Left colon (tissue), 2 donors: ENCODE measurements at regions of chr9 and their contacts with region 1.

Region 1: GRCh38 chr9:77751341-77752091 is 103.4 kb upstream of the GNA14 start:
- DNase-seq: no peak
- ATAC-seq: peak; percentile 79

Region 2: DNA sequence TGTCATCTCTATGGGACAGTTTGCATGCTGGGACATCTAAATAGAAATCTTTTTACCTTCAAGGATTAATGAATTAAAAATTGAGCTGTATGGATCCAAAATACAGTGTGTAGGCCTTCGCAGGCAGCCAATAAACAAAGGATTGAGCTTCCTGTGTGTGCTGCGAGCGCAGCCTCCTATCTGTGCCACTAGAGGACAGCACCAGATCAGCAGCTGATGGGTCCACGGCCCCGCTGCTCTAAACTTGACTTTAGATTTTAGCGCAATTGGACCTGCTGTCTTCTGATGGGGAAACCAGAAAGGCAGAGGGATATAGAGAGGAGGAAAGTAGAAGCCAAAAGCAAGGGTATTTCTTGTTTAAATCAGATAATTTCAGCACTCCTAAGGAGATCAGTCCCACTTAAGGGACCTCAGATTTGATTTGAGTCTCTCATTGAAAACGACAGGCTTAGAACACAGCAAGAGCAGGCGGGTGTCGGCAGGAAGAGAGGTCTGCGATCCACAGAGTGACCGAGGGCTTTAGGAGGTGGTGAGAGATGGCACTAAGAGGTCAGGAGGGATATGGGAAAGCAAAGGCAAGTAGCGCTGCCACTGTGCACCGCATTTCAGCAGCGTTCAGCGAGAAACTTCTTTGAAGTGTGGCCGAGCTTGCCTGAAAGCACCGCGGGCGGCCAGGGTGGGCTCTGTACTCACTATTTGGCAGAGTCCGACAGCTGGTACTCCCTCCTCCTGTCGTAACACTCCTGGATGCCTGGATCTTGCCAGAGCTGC is 317.7 kb before region 1 on chr9:
- intact Hi-C with region 1: loop called in 1 of 2 experiments (anchors 5 kb)
- DNase-seq: peak; percentile 38 to 60
- ATAC-seq: peak; percentile 96

Region 3: GRCh38 chr9:77456829-77457437 is 294.6 kb before region 1 on chr9:
- intact Hi-C with region 1: loop called in 1 of 2 experiments (anchors 5 kb)
- DNase-seq: peak; percentile 75 to 89
- ATAC-seq: peak; percentile 84